ENCODE measurements at regions of chr11 and their contacts with region 1.

Region 1: GRCh38 chr11:1515082-1516060 is 28.8 kb upstream of the MOB2 start:
- DNase-seq: peak; percentile 87

Region 2: DNA sequence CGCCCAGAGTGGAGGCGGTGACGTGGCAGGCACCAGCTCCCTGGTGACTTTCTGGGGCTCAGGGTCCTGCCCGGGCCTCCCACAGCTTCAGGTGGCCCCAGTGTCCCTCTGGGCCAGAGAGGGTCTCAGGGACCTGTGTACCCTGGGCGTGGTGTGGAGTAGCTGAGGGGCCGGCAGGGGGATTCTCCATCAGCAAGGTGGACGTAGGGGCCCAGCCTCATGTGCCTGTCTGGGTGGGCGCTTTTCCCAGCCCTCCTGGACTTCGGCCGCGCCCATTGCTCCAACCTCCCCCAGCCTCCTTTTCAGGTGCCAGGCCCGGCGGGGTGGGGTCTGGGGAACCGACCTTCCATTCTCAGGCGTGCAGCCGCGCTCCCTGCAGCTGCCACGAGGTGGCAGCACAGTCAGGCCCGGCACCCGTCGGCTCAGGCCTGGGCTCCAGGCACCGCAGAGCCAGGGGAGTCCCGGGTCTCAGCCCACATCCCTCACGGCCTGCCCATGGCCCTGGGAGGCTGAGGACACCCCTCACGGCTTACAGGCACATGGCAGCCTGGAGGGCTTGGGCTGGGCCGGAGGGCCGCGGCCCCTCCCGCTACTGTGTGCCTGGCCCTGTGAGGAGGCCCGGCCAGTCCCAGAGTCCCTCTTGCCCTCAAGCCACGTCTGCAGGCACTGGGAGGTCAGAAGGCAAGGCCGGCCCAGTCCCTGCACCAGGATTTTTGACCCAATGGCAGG is 312.4 kb before region 1 on chr11:
- intact Hi-C with region 1: loop called (anchors 5 kb)
- DNase-seq: peak; percentile 77

Region 3: GRCh38 chr11:1341928-1342524 is 173.3 kb before region 1 on chr11:
- intact Hi-C with region 1: loop called (anchors 2 kb)
- DNase-seq: no peak

Region 4: GRCh38 chr11:1458340-1459218 is 56.8 kb before region 1 on chr11:
- intact Hi-C with region 1: loop called (anchors 5 kb)
- DNase-seq: no peak

Measured in cardiac septum (tissue), 1 donor.